ENCODE measurements at regions of chr5 and their contacts with region 1.

Region 1: GRCh38 chr5:151509231-151509630 is 61.8 kb downstream of the SLC36A1 start:
- DNase-seq: no peak
- ATAC-seq: no peak
- H3K4me3 ChIP-seq: no peak overlapping the region
- H3K27ac ChIP-seq: peak overlapping the region; percentile 79
- H3K4me1 ChIP-seq: peaks cover 17% of the 10 kb centered on the region
- H3K27me3 ChIP-seq: no peaks in the 10 kb centered on the region
- CTCF ChIP-seq: no peak

Region 2: GRCh38 chr5:149724130-149724840 is 1784.9 kb before region 1 on chr5:
- intact Hi-C with region 1: loop called in 1 of 2 experiments (anchors 5 kb)
- DNase-seq: no peak
- ATAC-seq: no peak
- H3K4me3 ChIP-seq: no peak overlapping the region
- H3K27ac ChIP-seq: no peak overlapping the region
- H3K4me1 ChIP-seq: no peaks in the 10 kb centered on the region
- H3K27me3 ChIP-seq: no peaks in the 10 kb centered on the region
- CTCF ChIP-seq: no peak

Region 3: DNA sequence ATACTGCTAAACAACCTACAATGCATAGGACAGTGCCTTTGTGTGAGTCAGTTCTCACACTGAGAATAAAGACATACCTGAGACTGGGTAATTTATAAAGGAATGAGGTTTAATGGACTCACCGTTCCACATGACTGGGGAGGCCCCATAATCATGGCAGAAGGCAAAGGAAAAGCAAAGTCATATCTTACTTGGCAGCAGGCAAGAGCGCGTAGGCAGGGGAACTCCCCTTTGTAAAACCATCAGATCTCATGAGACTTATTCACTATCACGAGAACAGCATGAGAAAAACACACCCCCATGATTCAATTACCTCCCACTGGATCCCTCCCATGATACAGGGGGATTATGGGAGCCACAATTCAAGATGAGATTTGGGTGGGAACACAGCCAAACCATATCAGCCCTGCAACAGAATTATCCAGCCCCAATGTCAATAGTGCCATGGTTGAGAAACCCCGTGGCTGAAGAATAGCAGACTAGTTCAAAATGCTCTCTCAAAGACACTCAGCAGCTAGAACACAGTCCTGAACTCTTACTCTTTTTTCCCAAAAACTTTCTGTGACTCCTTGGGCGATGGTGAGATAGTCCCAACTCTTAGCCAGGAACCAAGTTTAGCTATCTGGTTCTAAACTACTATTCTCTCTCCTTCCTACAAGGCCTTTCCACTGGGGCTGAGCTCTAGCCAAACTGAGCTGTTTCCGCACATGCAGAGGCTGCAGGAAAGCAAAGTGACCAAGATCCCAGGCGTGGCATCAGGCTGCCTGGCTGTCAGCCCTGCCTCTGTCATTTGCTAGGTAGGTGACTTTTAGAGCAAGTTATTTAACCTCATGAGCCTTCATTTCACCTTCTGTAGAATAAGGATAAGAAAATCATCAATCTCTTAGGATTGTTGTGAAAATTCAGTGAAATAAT is 60.2 kb after region 1 on chr5:
- intact Hi-C with region 1: no loop called
- DNase-seq: no peak
- ATAC-seq: no peak
- H3K4me3 ChIP-seq: no peak overlapping the region
- H3K27ac ChIP-seq: no peak overlapping the region
- H3K4me1 ChIP-seq: no peaks in the 10 kb centered on the region
- H3K27me3 ChIP-seq: no peaks in the 10 kb centered on the region
- CTCF ChIP-seq: no peak

Measured in psoas muscle (tissue), 8 donors.